BJ (cell line): ENCODE measurements at regions of chr1 and their contacts with region 1.

Region 1: GRCh38 chr1:32116531-32116930 is 8.7 kb downstream of the KPNA6 start:
- DNase-seq: no peak
- H3K4me3 ChIP-seq: no peak overlapping the region
- H3K27me3 ChIP-seq: no peaks in the 10 kb centered on the region
- CTCF ChIP-seq: no peak

Region 2: DNA sequence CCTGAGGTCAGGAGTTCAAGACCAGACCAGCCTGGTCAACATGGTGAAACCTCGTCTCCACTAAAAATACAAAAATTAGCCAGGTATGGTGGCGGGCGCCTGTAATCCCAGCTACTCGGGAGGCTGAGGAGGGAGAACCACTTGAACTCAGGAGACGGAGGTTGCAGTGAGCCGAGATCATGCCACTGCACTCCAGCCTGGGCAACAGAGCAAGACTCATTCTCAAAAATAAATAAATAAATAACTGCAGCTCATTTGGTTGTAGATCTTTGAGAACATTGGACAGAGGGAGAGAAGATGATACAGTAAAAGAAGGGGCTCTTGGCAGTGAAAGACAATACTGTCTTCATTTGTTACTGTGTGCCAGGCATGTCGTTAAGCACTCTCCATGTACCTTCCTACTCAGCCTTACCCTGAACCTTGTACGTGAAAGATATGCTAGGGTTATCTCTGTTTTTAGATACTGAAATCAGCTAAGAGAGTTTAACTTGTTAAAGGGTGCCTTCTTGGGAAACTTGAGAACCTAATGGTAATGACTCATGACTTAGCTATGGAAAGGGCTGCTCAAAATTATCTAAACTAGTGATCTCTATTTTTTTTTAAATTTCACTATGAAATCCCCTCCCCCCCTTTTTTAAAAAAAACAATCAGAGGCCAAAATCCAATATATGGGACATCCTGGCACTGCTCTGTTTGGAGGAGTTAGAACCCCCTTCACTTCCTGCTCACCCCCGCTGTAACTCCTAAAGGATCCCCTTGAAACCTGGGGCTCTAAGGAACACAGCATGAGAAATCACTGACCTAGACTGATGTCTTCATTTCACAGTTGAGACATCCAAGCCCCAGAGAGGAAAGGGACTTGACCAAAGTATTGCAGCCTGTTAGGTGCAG is 15.5 kb before region 1 on chr1:
- CTCF ChIA-PET with region 1: interaction called, 4 read pairs
- POLR2A ChIA-PET with region 1: interaction called, 12 read pairs
- DNase-seq: peak; percentile 19
- H3K4me3 ChIP-seq: no peak overlapping the region
- H3K27me3 ChIP-seq: no peaks in the 10 kb centered on the region
- CTCF ChIP-seq: no peak